Sigmoid colon (tissue), 7 donors: ENCODE measurements at regions of chr3 and their contacts with region 1.

Region 1: GRCh38 chr3:36993326-36994283 is at the start of gene MLH1:
- DNase-seq: peak; percentile 97
- H3K4me3 ChIP-seq: peak within 1 kb of the TSS; percentile 62 to 68 (median 64)
- H3K27ac ChIP-seq: peak within 1 kb of the TSS; percentile 96 to 98 (median 97)
- H3K4me1 ChIP-seq: peaks cover 0 to 46% (median 44%) of the 10 kb centered on the region in 4 donors
- H3K27me3 ChIP-seq: no peaks in the 10 kb centered on the region
- CTCF ChIP-seq: no peak
- EP300 ChIP-seq: peak in 1 of 4 donors; percentile 2
- POLR2A ChIP-seq: peak; percentile 57 to 67
- total RNA-seq, gene MLH1: 27.2 to 60.3 (median 36.5) TPM

Region 2: GRCh38 chr3:37163262-37164015 is 169.8 kb after region 1 on chr3:
- intact Hi-C with region 1: no loop called
- DNase-seq: no peak
- H3K4me3 ChIP-seq: no peak overlapping the region
- H3K27ac ChIP-seq: no peak overlapping the region
- H3K4me1 ChIP-seq: peaks cover 0 to 7% (median 0%) of the 10 kb centered on the region in 4 donors
- H3K27me3 ChIP-seq: no peaks in the 10 kb centered on the region
- CTCF ChIP-seq: no peak
- EP300 ChIP-seq: no peak
- POLR2A ChIP-seq: no peak

Region 3: GRCh38 chr3:37210230-37210629 is 216.6 kb after region 1 on chr3:
- intact Hi-C with region 1: loop called (anchors 2 kb)
- DNase-seq: no peak
- H3K4me3 ChIP-seq: no peak overlapping the region
- H3K27ac ChIP-seq: no peak overlapping the region
- H3K4me1 ChIP-seq: peaks cover 0 to 16% (median 7%) of the 10 kb centered on the region in 4 donors
- H3K27me3 ChIP-seq: no peaks in the 10 kb centered on the region
- CTCF ChIP-seq: no peak
- EP300 ChIP-seq: no peak
- POLR2A ChIP-seq: no peak